Left cardiac atrium (tissue), 4 donors: ENCODE measurements at regions of chr3 and their contacts with region 1.

Region 1: GRCh38 chr3:171646357-171647133 is 163.7 kb downstream of the PLD1 start:
- DNase-seq: no peak
- ATAC-seq: peak; percentile 74 to 75

Region 2: GRCh38 chr3:172341482-172342059 is 695.0 kb after region 1 on chr3:
- intact Hi-C with region 1: loop called in 1 of 2 experiments (anchors 10 kb)
- DNase-seq: no peak
- ATAC-seq: peak; percentile 77 to 83